IMR-90 (cell line): ENCODE measurements at regions of chr5 and their contacts with region 1.

Region 1: DNA sequence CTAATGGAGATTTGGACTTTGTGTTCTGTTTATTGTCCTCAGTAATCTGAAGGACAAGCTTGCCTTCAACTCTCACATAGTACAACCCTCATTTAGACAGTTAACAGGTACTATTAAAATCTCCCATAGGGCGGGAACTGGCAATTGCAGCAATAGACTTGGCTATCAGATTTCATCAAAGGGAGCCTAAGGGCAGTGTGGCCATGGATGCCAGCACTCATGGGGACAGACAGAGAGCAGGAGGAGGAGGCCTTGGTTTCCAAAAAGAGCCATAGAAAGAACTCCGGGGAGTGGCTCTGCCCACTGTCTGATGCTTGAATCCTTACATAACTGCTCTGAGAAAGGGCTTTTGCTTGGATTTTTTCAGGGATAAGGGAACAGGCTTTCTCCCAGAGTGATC is 6.8 kb downstream of the SLC36A1 start:
- DNase-seq: no peak
- ATAC-seq: no peak
- H3K4me3 ChIP-seq: no peak overlapping the region
- H3K27ac ChIP-seq: no peak overlapping the region
- H3K4me1 ChIP-seq: peaks cover 7% of the 10 kb centered on the region
- H3K27me3 ChIP-seq: no peaks in the 10 kb centered on the region
- CTCF ChIP-seq: no peak
- POLR2A ChIP-seq: no peak
- RAD21 ChIP-seq: no peak

Region 2: DNA sequence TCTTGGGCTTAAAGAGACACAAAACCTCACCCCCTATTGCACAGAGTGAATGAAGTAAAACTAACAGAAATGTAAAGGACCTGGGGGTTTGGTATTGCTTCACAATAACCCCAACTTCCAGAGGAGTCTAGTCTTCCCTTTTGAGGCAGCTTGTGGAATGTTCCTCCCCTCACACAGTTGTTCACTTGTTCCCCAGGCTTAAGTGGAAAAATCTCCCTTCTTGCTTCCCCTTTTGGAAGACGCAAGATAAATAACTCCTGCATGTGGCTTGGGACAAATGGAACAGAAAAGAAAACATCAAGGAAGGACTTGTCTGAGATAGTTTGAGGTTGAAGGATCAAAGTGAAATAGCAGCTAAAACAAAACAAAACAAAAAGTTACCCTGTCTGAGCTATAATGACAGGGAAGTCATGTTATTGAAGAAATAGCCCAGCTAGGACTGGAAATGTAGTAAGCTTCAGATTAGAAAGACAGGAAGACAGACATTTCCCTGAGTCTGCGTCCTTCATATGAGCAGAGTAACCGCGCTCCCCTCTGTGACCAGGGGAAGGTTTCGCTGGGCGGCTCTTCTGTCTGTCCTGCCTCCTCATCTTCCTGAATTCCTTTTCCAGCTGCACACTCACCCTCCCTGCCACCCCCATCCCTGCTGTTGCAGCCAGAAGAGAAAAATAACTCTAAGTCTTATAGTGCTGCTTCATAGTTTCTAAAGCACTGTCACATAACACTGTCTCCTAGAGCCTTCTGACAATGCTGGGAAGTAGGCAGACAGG is 223.8 kb after region 1 on chr5:
- CTCF ChIA-PET with region 1: no interaction called
- POLR2A ChIA-PET with region 1: interaction called, 15 read pairs
- dilution Hi-C with region 1: no loop called
- in situ Hi-C with region 1: no loop called
- intact Hi-C with region 1: no loop called
- DNase-seq: peak; percentile 68
- ATAC-seq: peak; percentile 15
- H3K4me3 ChIP-seq: no peak overlapping the region
- H3K27ac ChIP-seq: peak overlapping the region; percentile 79; the same call in 1 of the 2 replicates
- H3K4me1 ChIP-seq: peaks cover 61% of the 10 kb centered on the region
- H3K27me3 ChIP-seq: no peaks in the 10 kb centered on the region
- CTCF ChIP-seq: no peak
- POLR2A ChIP-seq: no peak
- RAD21 ChIP-seq: no peak